ENCODE measurements at regions of chr1 and their contacts with region 1.

Region 1: GRCh38 chr1:28417429-28417922 is 47.9 kb downstream of the PHACTR4 start:
- DNase-seq: no peak
- H3K4me3 ChIP-seq: no peak overlapping the region
- H3K27ac ChIP-seq: no peak overlapping the region
- H3K4me1 ChIP-seq: peaks cover 12% of the 10 kb centered on the region
- CTCF ChIP-seq: no peak

Region 2: GRCh38 chr1:28449904-28450303 is 32.4 kb after region 1 on chr1:
- CTCF ChIA-PET with region 1: no interaction called
- POLR2A ChIA-PET with region 1: no interaction called
- intact Hi-C with region 1: loop called (anchors 5 kb)
- DNase-seq: peak; percentile 10
- H3K4me3 ChIP-seq: no peak overlapping the region
- H3K27ac ChIP-seq: no peak overlapping the region
- H3K4me1 ChIP-seq: peaks cover 15% of the 10 kb centered on the region
- CTCF ChIP-seq: no peak

Region 3: GRCh38 chr1:28470146-28470545 is 52.7 kb after region 1 on chr1:
- CTCF ChIA-PET with region 1: no interaction called
- POLR2A ChIA-PET with region 1: no interaction called
- intact Hi-C with region 1: no loop called
- DNase-seq: no peak
- H3K4me3 ChIP-seq: no peak overlapping the region
- H3K27ac ChIP-seq: no peak overlapping the region
- H3K4me1 ChIP-seq: no peaks in the 10 kb centered on the region
- CTCF ChIP-seq: no peak

Region 4: DNA sequence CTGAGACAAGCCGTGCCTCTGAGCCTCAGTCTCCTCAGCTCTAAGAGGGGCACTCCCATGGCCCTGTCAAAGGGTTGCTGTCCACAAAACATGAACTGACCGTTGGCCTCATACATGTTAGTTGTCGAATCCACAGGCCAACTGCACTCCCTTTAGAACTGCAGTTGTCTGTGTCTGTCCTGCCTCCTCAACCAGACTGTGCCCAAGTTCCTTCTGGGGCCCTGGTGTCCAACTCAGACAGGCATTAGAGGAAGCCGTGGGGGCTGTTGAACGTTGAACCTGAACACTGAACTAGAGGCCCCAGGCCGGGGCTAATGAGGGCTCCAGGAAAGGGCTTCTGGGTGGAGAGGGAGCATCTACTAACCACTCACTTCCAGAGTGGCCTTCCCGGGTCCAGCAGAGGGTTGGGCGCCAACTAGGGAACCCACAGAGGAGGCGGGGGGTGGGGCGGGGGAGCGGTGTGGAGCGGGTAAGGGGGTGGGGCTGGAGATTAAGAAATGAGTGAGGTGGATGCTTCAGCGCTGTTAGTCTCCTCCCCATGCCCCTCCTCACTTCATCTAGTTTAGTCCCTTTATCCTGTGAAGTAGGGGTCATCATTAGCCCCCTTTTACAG is 174.3 kb after region 1 on chr1 and contains the start of gene RAB42:
- CTCF ChIA-PET with region 1: no interaction called
- POLR2A ChIA-PET with region 1: no interaction called
- intact Hi-C with region 1: no loop called
- DNase-seq: no peak
- H3K4me3 ChIP-seq: no peak within 1 kb of the TSS
- H3K27ac ChIP-seq: no peak within 1 kb of the TSS
- H3K4me1 ChIP-seq: peaks cover 7% of the 10 kb centered on the region
- CTCF ChIP-seq: no peak
- total RNA-seq, gene RAB42: not detected in 2 replicates

Measured in OCI-LY7 (cell line).